ENCODE measurements at regions of chr6 and their contacts with region 1.

Region 1: GRCh38 chr6:121055572-121056163 is 278.6 kb downstream of the TBC1D32 start:
- DNase-seq: peak; percentile 58
- H3K4me3 ChIP-seq: no peak overlapping the region
- H3K27ac ChIP-seq: no peak overlapping the region
- H3K4me1 ChIP-seq: no peaks in the 10 kb centered on the region
- H3K27me3 ChIP-seq: no peaks in the 10 kb centered on the region
- CTCF ChIP-seq: peak; percentile 46 to 64
- POLR2A ChIP-seq: no peak

Region 2: DNA sequence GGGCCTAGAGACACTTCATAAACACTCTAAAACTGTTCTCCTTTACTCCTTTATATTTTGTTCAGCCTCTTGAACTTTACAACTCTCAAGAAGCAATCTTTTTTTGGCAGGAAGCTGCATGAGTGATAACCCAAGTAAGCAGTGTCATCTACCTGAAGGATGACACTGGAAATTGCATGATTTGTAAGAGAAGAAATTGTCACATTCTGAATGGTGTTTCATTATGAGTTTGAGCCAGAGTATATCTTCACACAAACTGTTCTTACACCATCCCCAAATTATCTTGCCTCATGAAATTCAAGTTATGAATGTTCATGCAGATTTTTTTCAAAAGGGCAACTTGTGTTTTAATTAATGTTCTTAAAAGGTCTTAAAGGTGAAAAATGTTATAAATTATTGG is 520.7 kb before region 1 on chr6:
- CTCF ChIA-PET with region 1: no interaction called
- POLR2A ChIA-PET with region 1: no interaction called
- dilution Hi-C with region 1: no loop called
- intact Hi-C with region 1: no loop called
- DNase-seq: no peak
- H3K4me3 ChIP-seq: no peak overlapping the region
- H3K27ac ChIP-seq: no peak overlapping the region
- H3K4me1 ChIP-seq: no peaks in the 10 kb centered on the region
- H3K27me3 ChIP-seq: no peaks in the 10 kb centered on the region
- CTCF ChIP-seq: no peak
- POLR2A ChIP-seq: no peak

Region 3: DNA sequence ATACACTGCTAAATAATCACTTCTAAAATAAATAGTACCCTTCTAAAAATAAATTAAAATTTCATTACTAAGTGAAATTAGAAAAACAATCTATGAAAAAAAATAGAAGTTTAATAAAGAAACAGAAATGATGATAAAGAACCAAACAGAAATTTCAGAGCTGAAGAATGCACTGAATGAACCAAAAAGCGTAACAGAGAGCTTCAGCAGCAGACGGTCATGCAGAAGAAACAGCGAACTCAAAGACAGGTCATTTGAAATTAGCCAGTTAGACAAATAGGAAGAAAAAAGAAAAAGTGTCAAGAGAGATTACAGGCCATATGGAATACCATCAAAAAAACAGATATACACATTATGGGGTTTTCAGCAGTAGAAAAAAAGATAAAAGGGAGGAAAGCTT is 428.1 kb before region 1 on chr6:
- CTCF ChIA-PET with region 1: no interaction called
- POLR2A ChIA-PET with region 1: no interaction called
- dilution Hi-C with region 1: no loop called
- intact Hi-C with region 1: no loop called
- DNase-seq: no peak
- H3K4me3 ChIP-seq: no peak overlapping the region
- H3K27ac ChIP-seq: no peak overlapping the region
- H3K4me1 ChIP-seq: no peaks in the 10 kb centered on the region
- H3K27me3 ChIP-seq: no peaks in the 10 kb centered on the region
- CTCF ChIP-seq: no peak
- POLR2A ChIP-seq: no peak

Region 4: DNA sequence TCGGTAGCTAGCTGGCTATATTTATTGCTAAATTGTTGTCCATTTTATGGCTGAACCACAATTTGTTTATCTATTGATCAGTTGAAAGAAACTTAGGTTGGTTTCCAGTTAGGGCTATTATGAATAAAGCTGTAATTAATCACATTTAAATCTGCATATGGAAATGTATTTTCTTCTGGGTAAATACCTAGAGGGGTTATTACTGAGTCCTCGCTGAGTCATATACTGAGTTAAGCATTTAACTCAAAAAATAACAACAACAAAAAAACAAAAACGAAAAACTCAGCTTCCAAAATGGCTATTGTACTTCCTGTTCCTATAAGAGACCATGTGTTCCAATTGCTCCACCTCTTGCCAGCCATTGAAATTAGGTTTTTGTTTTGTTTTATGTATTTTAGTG is 20.5 kb after region 1 on chr6:
- CTCF ChIA-PET with region 1: interaction called, 11 read pairs
- POLR2A ChIA-PET with region 1: no interaction called
- dilution Hi-C with region 1: no loop called
- intact Hi-C with region 1: no loop called
- DNase-seq: no peak
- H3K4me3 ChIP-seq: no peak overlapping the region
- H3K27ac ChIP-seq: no peak overlapping the region
- H3K4me1 ChIP-seq: no peaks in the 10 kb centered on the region
- H3K27me3 ChIP-seq: no peaks in the 10 kb centered on the region
- CTCF ChIP-seq: no peak
- POLR2A ChIP-seq: no peak

Region 5: DNA sequence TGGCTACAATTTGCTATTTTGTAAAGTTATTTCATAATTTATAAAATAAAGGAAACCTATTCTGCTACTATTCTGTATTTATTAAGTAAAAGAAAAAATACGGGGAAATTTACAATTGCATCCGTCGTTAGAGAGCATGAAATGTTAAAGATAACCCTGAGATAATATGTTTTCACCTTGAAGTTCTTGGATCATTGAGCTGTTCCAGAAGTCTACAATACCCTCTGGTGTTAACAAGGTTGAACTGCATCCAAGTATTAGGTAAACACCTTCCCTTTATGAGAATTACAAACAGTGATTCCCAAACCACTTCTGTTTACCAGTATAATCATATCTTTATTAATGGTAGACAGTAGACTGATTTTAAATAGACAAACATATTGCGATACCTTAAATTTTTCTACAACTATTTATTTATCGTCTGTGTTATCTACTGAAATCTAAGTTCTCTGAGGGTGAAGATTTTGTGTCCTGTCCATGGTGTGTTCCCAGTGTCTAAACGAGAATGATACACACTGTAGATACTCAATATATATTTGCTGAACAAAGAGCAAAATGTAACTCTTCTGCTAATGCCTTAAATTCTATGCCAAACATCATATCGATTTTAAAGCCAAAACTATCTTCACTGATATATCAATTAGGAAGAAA is 250.4 kb after region 1 on chr6:
- CTCF ChIA-PET with region 1: interaction called, 196 read pairs
- POLR2A ChIA-PET with region 1: no interaction called
- dilution Hi-C with region 1: no loop called
- intact Hi-C with region 1: loop called (anchors 1 kb)
- DNase-seq: peak; percentile 54
- H3K4me3 ChIP-seq: no peak overlapping the region
- H3K27ac ChIP-seq: no peak overlapping the region
- H3K4me1 ChIP-seq: no peaks in the 10 kb centered on the region
- H3K27me3 ChIP-seq: no peaks in the 10 kb centered on the region
- CTCF ChIP-seq: peak; percentile 33 to 43
- POLR2A ChIP-seq: no peak

Region 6: GRCh38 chr6:122033539-122034181 is 978.0 kb after region 1 on chr6:
- CTCF ChIA-PET with region 1: no interaction called
- POLR2A ChIA-PET with region 1: no interaction called
- dilution Hi-C with region 1: no loop called
- intact Hi-C with region 1: loop called (anchors 1 kb)
- DNase-seq: peak; percentile 69
- H3K4me3 ChIP-seq: no peak overlapping the region
- H3K27ac ChIP-seq: no peak overlapping the region
- H3K4me1 ChIP-seq: no peaks in the 10 kb centered on the region
- H3K27me3 ChIP-seq: no peaks in the 10 kb centered on the region
- CTCF ChIP-seq: peak; percentile 35 to 51
- POLR2A ChIP-seq: no peak

Region 7: GRCh38 chr6:122530440-122531046 is 1474.9 kb after region 1 on chr6:
- CTCF ChIA-PET with region 1: no interaction called
- POLR2A ChIA-PET with region 1: no interaction called
- dilution Hi-C with region 1: no loop called
- intact Hi-C with region 1: loop called (anchors 2 kb)
- DNase-seq: peak; percentile 76
- H3K4me3 ChIP-seq: no peak overlapping the region
- H3K27ac ChIP-seq: no peak overlapping the region
- H3K4me1 ChIP-seq: no peaks in the 10 kb centered on the region
- H3K27me3 ChIP-seq: peaks cover 1 to 3% of the 10 kb centered on the region in 2 experiments
- CTCF ChIP-seq: peak; percentile 67 to 82
- POLR2A ChIP-seq: no peak